Mucosa of descending colon (tissue), 3 donors: ENCODE measurements at regions of chrX and their contacts with region 1.

Region 1: DNA sequence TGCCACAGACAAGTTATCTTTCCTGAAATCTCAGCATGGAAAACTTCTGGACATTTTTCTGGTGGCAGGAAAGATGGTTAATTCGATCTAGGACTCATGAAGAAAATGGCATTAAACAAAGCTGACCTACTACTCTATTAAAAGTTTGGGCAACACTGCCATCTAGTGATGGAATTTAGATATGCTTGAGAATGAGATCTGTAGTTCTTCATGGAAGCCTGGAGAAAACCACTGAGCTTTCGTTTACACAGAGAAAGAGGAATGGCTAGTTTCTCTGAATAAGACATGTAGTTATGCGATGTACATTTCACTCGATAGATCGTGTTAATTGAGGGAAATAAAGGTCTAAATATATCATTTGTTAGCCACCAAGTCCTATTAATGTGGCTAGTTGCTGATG is 51.7 kb upstream of the CHRDL1 start:
- DNase-seq: peak in 1 of 3 donors; percentile 41
- ATAC-seq: peak; percentile 63
- H3K4me3 ChIP-seq: no peak overlapping the region
- H3K4me1 ChIP-seq: no peaks in the 10 kb centered on the region
- CTCF ChIP-seq: no peak

Region 2: GRCh38 chrX:110156167-110156754 is 691.1 kb before region 1 on chrX:
- intact Hi-C with region 1: loop called in 1 of 2 experiments (anchors 10 kb)
- DNase-seq: no peak
- ATAC-seq: no peak
- H3K4me3 ChIP-seq: no peak overlapping the region
- H3K4me1 ChIP-seq: no peaks in the 10 kb centered on the region
- CTCF ChIP-seq: peak; percentile 10

Region 3: GRCh38 chrX:110442640-110443039 is 404.7 kb before region 1 on chrX:
- intact Hi-C with region 1: loop called in 1 of 2 experiments (anchors 5 kb)
- DNase-seq: peak in 1 of 3 donors; percentile 8
- ATAC-seq: peak; percentile 62
- H3K4me3 ChIP-seq: no peak overlapping the region
- H3K4me1 ChIP-seq: no peaks in the 10 kb centered on the region
- CTCF ChIP-seq: no peak

Region 4: GRCh38 chrX:110450050-110450449 is 397.3 kb before region 1 on chrX:
- intact Hi-C with region 1: loop called (anchors 5 to 10 kb)
- DNase-seq: peak in 2 of 3 donors; percentile 63 to 79
- ATAC-seq: peak; percentile 89
- H3K4me3 ChIP-seq: no peak overlapping the region
- H3K4me1 ChIP-seq: no peaks in the 10 kb centered on the region
- CTCF ChIP-seq: peak; percentile 32